ENCODE measurements at regions of chr17 and their contacts with region 1.

Region 1: DNA sequence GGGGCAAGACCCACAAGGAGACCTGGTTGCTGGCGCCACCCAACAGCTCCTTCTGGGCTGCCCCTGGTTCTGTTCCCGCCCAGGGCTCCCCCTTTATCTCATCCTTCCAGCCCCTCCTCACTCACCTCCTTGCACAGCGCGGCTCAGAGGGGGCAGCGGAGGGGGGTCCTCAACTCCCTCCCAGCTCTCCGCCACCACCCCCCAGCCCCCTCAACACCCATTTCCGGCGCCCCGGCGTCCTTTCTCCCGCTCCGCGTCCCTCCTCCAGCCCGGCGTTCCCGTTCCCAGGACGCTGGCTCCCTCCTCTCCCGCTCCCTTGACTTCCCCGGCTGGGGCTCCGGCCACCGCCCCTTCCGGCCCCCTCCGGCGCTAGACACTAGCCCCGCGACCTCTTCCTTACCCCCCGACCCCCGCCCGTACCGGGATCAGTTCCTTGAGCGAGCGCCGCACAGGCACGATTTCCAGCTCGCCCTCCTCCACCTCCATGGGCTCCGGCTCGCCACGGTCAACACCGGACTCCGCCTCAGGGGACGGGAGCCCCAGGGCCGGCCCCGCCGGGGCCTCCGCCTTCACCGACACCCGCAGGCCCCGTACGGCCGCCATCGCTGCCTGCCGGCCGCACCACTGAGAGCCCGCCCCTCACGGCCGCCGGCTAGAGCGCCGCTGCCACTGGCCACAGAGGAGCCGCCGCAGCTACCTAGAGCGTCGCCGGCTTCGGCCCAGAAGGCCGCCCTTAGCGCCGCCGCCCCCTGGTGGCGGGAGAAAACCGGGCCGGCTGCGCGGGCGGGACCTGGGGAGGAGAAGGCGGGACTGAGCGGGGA is at the start of gene NCBP3:
- DNase-seq: peak; percentile 85 to 93
- H3K4me3 ChIP-seq: peak within 1 kb of the TSS; percentile 76 to 92
- H3K27ac ChIP-seq: peak within 1 kb of the TSS; percentile 87 to 91
- H3K4me1 ChIP-seq: peaks cover 0 to 25% (median 10%) of the 10 kb centered on the region in 4 donors
- H3K27me3 ChIP-seq: peaks cover 0 to 4% of the 10 kb centered on the region in 2 donors
- CTCF ChIP-seq: peak; percentile 97 to 98

Region 2: DNA sequence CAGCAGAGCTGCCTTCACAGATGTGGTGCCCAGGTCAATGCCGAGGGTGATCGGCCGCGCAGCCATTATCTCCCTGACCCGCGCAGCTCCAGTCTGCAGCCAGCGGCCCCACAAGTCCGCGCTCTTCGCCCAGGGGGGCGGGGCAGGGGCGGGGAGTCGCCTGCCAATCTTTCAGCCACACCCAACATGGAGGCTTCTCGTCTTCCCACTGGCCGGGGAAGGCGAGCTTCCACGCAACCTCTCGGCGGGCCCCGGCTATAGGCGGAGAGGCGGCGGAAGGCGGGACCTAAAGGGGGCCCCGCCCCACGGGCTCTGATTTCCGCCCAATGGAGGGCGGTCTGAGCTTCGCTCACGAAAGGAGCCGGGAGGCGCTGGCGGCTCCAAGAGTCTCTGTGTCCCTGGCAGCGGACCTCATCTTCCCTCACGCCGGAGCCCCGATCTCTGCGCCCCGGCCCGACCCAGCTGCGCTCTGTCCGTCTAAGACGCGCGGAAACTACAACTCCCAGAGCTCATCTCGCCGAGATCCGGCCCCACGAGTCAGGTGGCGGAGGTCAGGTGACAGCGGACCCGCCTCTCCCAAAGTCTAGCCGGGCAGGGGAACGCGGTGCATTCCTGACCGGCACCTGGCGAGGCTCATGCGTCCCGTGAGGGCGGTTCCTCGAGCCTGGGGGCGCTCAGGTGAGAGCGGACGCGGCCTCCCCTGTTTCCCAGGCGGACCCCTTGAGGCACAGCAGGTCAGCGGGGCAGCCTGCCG is 209.5 kb before region 1 on chr17 and contains the starts of genes CTNS and SHPK:
- intact Hi-C with region 1: no loop called
- DNase-seq: peak; percentile 97 to 98
- H3K4me3 ChIP-seq: peak within 1 kb of the TSS; percentile 92 to 94
- H3K27ac ChIP-seq: peak within 1 kb of the TSS; percentile 93 to 98
- H3K4me1 ChIP-seq: peaks cover 0 to 35% (median 22%) of the 10 kb centered on the region in 4 donors
- H3K27me3 ChIP-seq: no peaks in the 10 kb centered on the region
- CTCF ChIP-seq: peak in 1 of 2 experiments; percentile 7

Region 3: DNA sequence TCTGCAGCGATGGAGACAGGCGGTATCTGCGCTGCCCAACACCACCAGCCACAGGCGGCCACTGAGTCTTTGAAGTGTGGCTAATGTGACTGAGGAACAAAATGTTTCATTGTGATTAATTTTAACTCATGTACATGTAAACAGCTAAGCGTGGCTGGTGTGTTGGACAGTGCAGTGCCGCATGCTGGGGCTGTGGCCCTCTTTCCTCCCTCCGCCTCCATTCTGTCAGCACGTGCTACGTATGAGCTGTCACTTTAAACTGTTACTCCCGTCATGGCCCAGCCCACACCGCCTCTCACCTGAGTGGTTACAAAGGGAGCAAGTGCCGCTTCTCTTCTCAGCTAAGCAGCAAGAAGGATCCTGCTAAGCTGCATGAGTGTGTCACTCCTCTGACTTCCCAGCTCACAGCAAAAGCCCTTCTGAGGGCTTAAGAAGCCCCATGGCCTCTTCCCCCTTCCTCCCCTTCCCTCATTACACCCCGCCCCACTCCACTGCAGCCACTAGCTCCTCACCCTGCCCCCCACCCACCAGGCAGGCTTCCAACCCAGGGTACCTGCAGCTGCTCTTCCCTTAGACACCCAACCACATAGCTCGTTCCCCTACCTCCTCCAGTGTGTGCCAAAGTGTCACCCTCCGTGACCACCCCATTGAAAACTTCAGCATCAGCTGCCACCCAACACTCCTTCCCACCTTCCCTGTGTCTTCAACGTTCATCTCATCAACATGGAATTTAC is 107.1 kb before region 1 on chr17:
- intact Hi-C with region 1: loop called (anchors 10 kb)
- DNase-seq: no peak
- H3K4me3 ChIP-seq: peak overlapping the region in 1 of 2 donors; percentile 9
- H3K27ac ChIP-seq: no peak overlapping the region
- H3K4me1 ChIP-seq: peaks cover 0 to 15% (median 5%) of the 10 kb centered on the region in 4 donors
- H3K27me3 ChIP-seq: peaks cover 0 to 12% of the 10 kb centered on the region in 2 donors
- CTCF ChIP-seq: no peak

Region 4: DNA sequence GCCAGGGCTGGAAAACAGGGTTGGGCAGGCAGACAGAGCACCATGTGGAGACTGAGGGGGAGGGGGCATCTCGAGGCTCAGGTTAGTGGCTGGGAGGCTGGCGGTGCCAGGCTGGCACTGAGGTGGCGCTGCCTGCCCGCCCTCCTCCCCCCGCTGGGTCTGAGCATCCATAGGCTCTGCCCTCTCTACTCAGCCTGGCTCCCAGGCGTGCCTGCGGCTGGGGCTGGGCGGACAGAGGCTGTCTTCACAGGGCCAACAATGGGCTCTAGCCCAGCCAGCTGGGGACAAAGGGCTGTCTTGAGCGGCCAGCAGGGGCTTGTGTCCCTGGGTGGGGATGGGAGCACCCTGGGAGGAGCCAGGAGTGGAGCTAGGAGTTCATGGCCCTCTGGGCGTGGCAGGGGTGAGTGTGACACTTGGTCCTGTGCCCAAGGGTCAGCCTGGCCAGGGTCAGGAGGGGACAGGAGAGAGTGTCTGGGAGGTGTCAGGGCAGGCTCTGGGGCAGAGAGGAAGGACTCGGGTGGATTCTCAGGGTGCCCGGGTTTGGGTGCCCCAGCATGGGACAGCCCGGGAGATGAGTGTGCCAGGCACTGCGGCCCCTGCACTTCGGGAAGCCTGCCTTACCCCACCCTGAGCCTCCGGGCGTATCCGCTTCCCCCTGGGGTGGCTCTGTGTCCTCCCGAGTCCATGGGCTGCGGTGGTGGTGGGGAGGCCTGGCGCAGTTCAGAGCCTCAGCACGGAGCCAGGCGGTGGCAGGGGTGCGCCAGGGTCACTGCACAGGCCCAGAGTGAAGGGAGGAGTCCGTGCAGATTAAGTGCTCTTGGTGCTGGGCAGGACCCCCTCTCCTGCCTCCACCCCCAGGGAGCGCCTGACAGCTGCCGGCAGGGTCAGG is 688.4 kb after region 1 on chr17:
- intact Hi-C with region 1: loop called (anchors 5 kb)
- DNase-seq: no peak
- H3K4me3 ChIP-seq: no peak overlapping the region
- H3K27ac ChIP-seq: no peak overlapping the region
- H3K4me1 ChIP-seq: peaks cover 10 to 48% (median 32%) of the 10 kb centered on the region in 4 donors
- H3K27me3 ChIP-seq: peaks cover 0 to 6% of the 10 kb centered on the region in 2 donors
- CTCF ChIP-seq: no peak